K562 (cell line): ENCODE measurements at regions of chr1 and their contacts with region 1.

Region 1: GRCh38 chr1:235971571-235972310 is 93.1 kb downstream of the NID1 start:
- DNase-seq: peak; percentile 73 to 86 (median 78)
- ATAC-seq: peak; percentile 100
- H3K4me3 ChIP-seq: no peak overlapping the region
- H3K27ac ChIP-seq: no peak overlapping the region
- H3K4me1 ChIP-seq: peaks cover 0 to 2% of the 10 kb centered on the region in 2 experiments; a peak in 1 of 5 replicates
- H3K27me3 ChIP-seq: 0 out of 5 replicates have a peak, but pooled peaks cover 0 to 5% of the 10 kb centered on the region in 2 experiments
- CTCF ChIP-seq: peak; percentile 82 to 93 (median 92)
- EP300 ChIP-seq: no peak
- POLR2A ChIP-seq: no peak
- RAD21 ChIP-seq: peak; percentile 81 to 90

Region 2: GRCh38 chr1:235783148-235783776 is 188.5 kb before region 1 on chr1:
- CTCF ChIA-PET with region 1: no interaction called
- POLR2A ChIA-PET with region 1: no interaction called
- in situ Hi-C with region 1: no loop called
- intact Hi-C with region 1: loop called (anchors 5 kb)
- DNase-seq: peak in 1 of 4 experiments; percentile 34
- ATAC-seq: peak; percentile 45; the same call in 1 of the 3 replicates
- H3K4me3 ChIP-seq: no peak overlapping the region
- H3K27ac ChIP-seq: no peak overlapping the region
- H3K4me1 ChIP-seq: no peaks in the 10 kb centered on the region
- H3K27me3 ChIP-seq: peaks cover 0 to 4% of the 10 kb centered on the region in 2 experiments; a peak in 1 of 5 replicates
- CTCF ChIP-seq: peak in 2 of 3 experiments; percentile 34 to 73; a peak in 3 of 6 replicates
- EP300 ChIP-seq: no peak
- POLR2A ChIP-seq: no peak
- RAD21 ChIP-seq: peak; percentile 63 to 70

Region 3: DNA sequence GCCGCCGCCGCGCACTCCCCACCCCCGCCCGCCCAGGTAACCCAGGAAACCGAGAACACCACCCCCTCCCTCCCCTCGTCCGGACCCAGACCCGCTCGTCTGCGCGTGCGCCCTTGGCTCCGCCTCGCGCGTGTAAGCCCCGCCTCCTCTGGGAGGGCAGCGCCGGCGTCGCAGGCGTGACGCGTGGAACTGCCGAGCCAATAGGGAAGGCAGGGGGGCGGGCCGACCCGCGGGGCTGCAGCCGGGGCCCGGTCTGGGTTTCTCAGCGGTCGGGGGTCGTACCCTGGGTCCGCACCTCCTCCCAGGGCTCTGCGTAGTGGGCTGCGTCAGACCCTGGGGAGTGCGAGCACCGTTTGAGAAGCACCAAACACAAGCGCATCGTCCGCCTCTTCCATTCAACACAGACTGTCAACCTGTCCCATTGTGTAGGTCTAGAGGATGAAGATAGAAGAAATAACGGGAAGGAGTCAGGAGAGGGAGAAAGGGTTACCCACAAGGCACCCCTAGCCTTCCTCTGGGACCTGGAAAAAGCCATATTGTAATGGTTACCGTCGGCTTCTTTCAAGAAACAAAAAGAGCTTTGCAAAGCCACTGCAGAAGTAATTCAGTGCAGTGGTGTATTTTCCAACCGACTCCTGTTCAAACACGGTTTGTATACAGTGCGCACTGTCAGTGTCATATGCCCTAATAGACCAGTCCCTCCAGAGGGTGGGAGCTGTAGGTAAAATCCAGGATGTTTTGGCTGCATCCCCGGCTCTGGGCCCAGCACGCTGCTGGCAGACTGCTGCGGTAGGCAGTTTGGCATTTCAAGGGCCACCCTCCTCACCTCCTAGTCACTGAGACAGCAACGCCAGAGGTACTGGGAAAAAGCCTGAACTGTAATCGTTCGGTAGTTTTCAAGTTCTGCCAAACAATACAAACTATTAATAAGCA is 104.6 kb before region 1 on chr1:
- CTCF ChIA-PET with region 1: interaction called, 10 read pairs
- POLR2A ChIA-PET with region 1: no interaction called
- in situ Hi-C with region 1: no loop called
- intact Hi-C with region 1: loop called (anchors 5 kb)
- DNase-seq: peak; percentile 98 to 100 (median 99)
- ATAC-seq: peak; percentile 96
- H3K4me3 ChIP-seq: peak overlapping the region; percentile 80
- H3K27ac ChIP-seq: peak overlapping the region; percentile 55; the same call in 2 of the 3 replicates
- H3K4me1 ChIP-seq: peaks cover 9 to 13% of the 10 kb centered on the region in 2 experiments; a peak in 4 of 5 replicates
- H3K27me3 ChIP-seq: peaks cover 14 to 20% of the 10 kb centered on the region in 2 experiments
- CTCF ChIP-seq: no peak
- EP300 ChIP-seq: no peak
- POLR2A ChIP-seq: peak; percentile 95
- RAD21 ChIP-seq: 0 out of 4 replicates have a peak, but pooled peaks of 1 of the 2 experiments have one; percentile 8

Region 4: DNA sequence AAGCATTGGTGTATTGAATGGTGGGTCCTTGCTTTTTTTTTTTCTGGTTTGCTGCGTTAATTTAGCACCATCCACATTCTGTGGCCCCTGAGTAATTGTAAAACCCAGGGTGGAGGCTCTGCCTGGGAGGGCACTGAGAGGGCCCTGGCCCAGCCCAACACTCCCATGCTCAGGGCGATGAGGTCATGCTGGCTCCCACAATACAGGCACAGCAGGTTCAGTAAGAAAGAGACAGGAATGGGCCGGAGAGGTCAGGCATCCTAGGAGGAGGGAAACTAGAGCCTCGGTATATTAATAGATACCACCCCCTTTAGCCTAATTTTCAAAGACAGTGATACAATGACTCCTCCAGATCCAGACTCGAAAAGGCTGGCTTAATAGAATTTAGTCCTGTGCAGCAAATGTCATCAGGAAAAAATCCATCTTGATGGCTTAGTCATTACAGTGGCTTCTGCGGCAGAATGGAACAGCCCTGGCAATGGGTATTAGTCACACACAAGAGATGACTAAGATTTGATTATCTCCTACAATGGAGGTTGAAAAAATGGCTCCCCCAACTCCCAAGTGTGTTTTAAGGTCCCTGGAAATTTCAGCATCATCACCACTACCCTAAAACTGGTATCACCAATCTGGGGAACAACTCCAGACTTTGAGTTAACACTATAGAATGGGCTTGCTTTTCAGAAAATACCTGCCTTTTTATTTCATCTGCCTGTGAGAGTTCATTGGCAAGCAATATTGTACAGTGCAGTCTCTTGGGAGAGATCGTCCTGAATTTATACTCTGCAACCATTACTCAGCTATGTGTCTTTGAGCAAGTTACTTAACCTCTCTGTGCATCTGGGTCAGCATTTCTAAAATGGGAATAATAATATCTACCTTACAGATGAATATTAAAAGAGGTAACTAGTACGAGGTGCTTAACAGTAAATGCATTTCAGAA is 61.1 kb before region 1 on chr1:
- CTCF ChIA-PET with region 1: no interaction called
- POLR2A ChIA-PET with region 1: no interaction called
- in situ Hi-C with region 1: no loop called
- intact Hi-C with region 1: no loop called
- DNase-seq: peak in 1 of 4 experiments; percentile 11
- ATAC-seq: peak; percentile 53; the same call in 2 of the 3 replicates
- H3K4me3 ChIP-seq: no peak overlapping the region
- H3K27ac ChIP-seq: no peak overlapping the region
- H3K4me1 ChIP-seq: no peaks in the 10 kb centered on the region
- H3K27me3 ChIP-seq: peaks cover 19 to 36% of the 10 kb centered on the region in 2 experiments
- CTCF ChIP-seq: no peak
- EP300 ChIP-seq: no peak
- POLR2A ChIP-seq: no peak
- RAD21 ChIP-seq: no peak